A673 (cell line): ENCODE measurements at regions of chr10 and their contacts with region 1.

Region 1: DNA sequence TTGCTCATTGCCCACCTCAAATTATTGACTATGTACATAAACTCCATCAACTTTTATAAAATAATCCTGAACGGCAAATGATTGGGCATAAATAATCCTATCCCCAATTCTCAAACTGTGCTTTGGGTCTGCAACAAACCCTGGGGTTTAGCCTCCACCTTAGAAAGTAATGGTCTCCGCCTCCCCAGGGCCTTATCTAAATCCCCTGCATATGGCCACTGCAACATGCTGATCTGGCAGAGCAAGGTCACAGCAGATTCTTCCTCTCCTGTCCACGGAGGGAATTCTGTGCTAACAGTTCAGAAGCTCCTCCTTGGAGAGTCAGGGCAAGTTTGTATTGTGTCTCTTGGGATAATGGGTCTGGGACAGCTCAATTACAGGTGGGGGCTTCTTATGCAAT is 18.4 kb downstream of the FXYD4 start:
- DNase-seq: no peak
- H3K4me3 ChIP-seq: no peak overlapping the region
- H3K27ac ChIP-seq: no peak overlapping the region
- H3K4me1 ChIP-seq: peaks cover 5% of the 10 kb centered on the region
- H3K27me3 ChIP-seq: no peaks in the 10 kb centered on the region
- CTCF ChIP-seq: no peak

Region 2: GRCh38 chr10:43348511-43349312 is 41.2 kb before region 1 on chr10:
- CTCF ChIA-PET with region 1: no interaction called
- POLR2A ChIA-PET with region 1: no interaction called
- intact Hi-C with region 1: no loop called
- DNase-seq: peak; percentile 86
- H3K4me3 ChIP-seq: no peak overlapping the region
- H3K27ac ChIP-seq: no peak overlapping the region
- H3K4me1 ChIP-seq: peaks cover 2% of the 10 kb centered on the region
- H3K27me3 ChIP-seq: no peaks in the 10 kb centered on the region
- CTCF ChIP-seq: peak; percentile 98

Region 3: DNA sequence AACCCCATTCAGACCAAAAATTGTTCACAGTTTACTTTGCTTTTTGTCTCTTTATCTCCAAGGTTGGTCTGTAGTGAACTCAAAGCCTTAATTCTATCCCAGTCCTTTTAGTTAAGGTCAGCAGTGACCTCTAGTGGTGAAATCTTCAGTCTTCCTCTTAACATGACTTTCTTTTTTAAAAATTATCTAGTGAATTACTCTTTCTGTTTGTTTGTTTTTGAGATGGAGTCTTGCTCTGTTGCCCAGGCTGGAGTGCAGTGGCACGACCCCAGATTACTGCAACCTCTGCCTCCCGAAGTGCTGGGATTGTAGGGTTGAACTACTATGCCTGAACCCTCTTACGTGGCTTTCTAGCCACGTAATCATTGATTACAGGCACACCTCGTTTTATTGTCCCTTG is 72.1 kb after region 1 on chr10:
- CTCF ChIA-PET with region 1: no interaction called
- POLR2A ChIA-PET with region 1: no interaction called
- intact Hi-C with region 1: loop called (anchors 2 kb)
- DNase-seq: peak; percentile 85
- H3K4me3 ChIP-seq: no peak overlapping the region
- H3K27ac ChIP-seq: no peak overlapping the region
- H3K4me1 ChIP-seq: no peaks in the 10 kb centered on the region
- H3K27me3 ChIP-seq: no peaks in the 10 kb centered on the region
- CTCF ChIP-seq: peak; percentile 75